ENCODE measurements at regions of chr7 and their contacts with region 1.

Region 1: DNA sequence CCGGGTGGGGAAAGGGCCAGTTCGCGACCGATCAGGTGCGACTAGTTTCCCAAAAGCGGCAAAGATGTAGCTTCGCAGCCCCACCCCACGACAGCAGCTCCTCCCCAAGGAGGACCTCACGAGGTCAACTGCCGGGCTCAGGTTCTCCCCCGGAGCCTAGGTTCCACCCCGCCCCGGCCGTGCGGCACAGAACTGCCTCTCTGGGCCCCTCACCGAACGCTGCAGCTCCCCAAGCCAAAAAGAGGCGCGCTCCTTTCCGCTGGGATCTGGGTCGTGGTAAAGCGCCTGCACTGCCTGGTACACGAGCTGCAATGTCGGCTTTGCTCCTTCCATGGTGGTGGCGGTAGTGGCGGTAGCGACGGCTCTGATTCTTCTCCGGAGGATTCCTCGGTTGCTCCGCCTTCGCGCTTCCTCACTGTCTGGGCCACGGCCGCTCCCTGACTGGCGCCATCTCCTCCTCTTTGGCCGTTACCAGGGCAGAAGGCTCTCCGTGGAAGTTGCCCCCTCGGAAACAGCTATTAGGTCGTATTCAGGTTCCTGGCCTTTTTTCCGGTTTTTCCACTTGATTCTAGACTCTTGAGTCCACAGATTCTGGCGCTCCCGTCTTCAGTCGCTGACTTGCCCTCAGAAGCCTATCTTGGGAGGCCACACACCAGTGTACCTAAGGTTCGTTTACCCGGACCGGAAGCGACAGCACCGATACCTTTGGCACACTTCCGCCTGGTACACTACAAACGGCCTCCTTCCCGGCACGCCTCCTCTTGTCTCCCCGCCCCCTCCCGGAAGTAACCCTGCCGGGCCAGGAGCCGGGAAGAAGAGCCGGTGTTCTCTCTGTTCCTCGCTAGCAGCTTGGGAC is at the start of gene TNPO3:
- DNase-seq: peak; percentile 88
- ATAC-seq: peak; percentile 95
- H3K4me3 ChIP-seq: peak within 1 kb of the TSS; percentile 91 to 99 (median 94)
- H3K27ac ChIP-seq: peak within 1 kb of the TSS; percentile 100
- H3K4me1 ChIP-seq: peaks cover 40% of the 10 kb centered on the region
- H3K27me3 ChIP-seq: no peaks in the 10 kb centered on the region; a peak in 1 of 5 replicates
- CTCF ChIP-seq: no peak
- EP300 ChIP-seq: 0 out of 4 replicates have a peak, but pooled peaks of 1 of the 2 experiments have one; percentile 31
- POLR2A ChIP-seq: peak; percentile 74 to 93
- RAD21 ChIP-seq: peak; percentile 22; the same call in 1 of the 2 replicates
- total RNA-seq, gene TNPO3: 44.6 and 61.5 TPM in 2 replicates

Region 2: DNA sequence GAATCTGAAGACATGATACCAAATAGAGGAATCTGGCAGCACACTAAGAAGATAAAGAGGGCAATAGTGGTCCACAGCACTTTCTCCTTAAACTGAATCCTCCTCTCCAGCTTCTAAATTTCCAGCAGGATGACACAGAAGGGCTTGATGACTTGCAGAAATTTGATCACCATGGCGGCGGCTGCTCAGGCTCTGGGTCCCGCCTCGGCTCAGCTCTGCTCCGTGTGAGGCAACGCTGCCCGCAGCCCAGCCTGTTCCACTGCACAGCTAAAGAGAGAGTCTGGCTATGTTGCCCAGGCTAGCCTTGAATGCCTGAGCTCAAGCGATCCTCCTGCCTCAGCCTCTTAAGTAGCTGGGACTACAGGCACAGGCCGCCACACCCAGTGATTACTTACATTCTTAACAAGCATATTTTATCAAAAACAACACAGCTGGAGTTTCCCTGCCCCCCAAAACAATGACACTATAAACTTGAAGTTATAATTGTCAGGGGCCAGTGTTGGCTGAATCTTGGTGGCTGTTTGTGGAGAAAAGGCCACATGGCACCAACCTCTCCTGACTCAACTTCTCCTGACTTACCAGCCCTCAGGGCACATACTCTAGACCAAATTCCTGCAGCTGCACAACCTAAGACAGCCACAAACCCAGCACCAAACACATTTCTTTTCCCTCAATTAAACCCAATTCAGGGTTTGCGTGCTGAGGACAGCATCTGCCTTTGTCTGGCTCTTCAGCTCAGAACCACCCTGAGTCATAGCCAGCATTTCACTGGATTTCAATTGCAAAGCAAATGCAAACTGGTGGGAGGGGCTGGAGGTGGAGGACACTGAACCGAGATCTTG is 11.8 kb after region 1 on chr7:
- CTCF ChIA-PET with region 1: no interaction called
- POLR2A ChIA-PET with region 1: interaction called, 13 read pairs
- in situ Hi-C with region 1: no loop called
- intact Hi-C with region 1: no loop called
- DNase-seq: no peak
- ATAC-seq: peak; percentile 75
- H3K4me3 ChIP-seq: no peak overlapping the region
- H3K27ac ChIP-seq: no peak overlapping the region
- H3K4me1 ChIP-seq: peaks cover 7% of the 10 kb centered on the region
- H3K27me3 ChIP-seq: peaks cover 0 to 5% of the 10 kb centered on the region in 2 experiments; a peak in 1 of 5 replicates
- CTCF ChIP-seq: no peak
- EP300 ChIP-seq: no peak
- POLR2A ChIP-seq: no peak
- RAD21 ChIP-seq: no peak

Region 3: GRCh38 chr7:129091484-129092002 is 36.9 kb after region 1 on chr7:
- CTCF ChIA-PET with region 1: no interaction called
- POLR2A ChIA-PET with region 1: interaction called, 3 read pairs
- in situ Hi-C with region 1: no loop called
- intact Hi-C with region 1: loop called (anchors 1 kb)
- DNase-seq: peak; percentile 63
- ATAC-seq: peak; percentile 97
- H3K4me3 ChIP-seq: peak overlapping the region in 1 of 3 experiments; percentile 29; a peak in 2 of 6 replicates
- H3K27ac ChIP-seq: no peak overlapping the region
- H3K4me1 ChIP-seq: peaks cover 26% of the 10 kb centered on the region
- H3K27me3 ChIP-seq: no peaks in the 10 kb centered on the region
- CTCF ChIP-seq: peak; percentile 98
- EP300 ChIP-seq: no peak
- POLR2A ChIP-seq: no peak
- RAD21 ChIP-seq: peak; percentile 92

Region 4: GRCh38 chr7:129101746-129102145 is 47.1 kb after region 1 on chr7:
- CTCF ChIA-PET with region 1: no interaction called
- POLR2A ChIA-PET with region 1: no interaction called
- in situ Hi-C with region 1: no loop called
- intact Hi-C with region 1: loop called (anchors 5 kb)
- DNase-seq: no peak
- ATAC-seq: no peak
- H3K4me3 ChIP-seq: no peak overlapping the region
- H3K27ac ChIP-seq: peak overlapping the region; percentile 79
- H3K4me1 ChIP-seq: peaks cover 60% of the 10 kb centered on the region
- H3K27me3 ChIP-seq: no peaks in the 10 kb centered on the region
- CTCF ChIP-seq: no peak
- EP300 ChIP-seq: no peak
- POLR2A ChIP-seq: no peak
- RAD21 ChIP-seq: no peak

Measured in HepG2 (cell line).